ENCODE measurements at regions of chr19 and their contacts with region 1.

Region 1: DNA sequence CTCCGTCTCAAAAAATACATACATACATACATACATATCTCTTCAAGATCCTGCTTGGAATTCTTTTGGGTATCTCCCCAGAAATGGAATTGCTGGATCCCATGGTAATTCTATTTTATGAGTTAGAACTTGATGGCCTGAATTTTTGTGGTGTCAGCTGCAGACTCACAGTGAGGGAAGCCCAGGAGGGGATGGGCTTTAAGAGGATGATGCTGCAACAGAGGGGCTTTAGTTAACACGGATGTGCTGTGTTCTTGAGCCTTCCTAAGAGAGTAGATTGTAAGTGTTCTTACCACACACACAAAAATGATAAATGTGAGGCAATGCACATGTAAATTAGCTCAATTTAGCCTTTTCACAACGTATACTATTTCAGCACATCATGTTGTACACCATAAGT is 31.8 kb downstream of the CACNG6 start:
- DNase-seq: no peak
- H3K4me3 ChIP-seq: no peak overlapping the region
- H3K27ac ChIP-seq: no peak overlapping the region
- H3K4me1 ChIP-seq: no peaks in the 10 kb centered on the region
- H3K27me3 ChIP-seq: no peaks in the 10 kb centered on the region
- CTCF ChIP-seq: no peak
- POLR2A ChIP-seq: no peak

Region 2: DNA sequence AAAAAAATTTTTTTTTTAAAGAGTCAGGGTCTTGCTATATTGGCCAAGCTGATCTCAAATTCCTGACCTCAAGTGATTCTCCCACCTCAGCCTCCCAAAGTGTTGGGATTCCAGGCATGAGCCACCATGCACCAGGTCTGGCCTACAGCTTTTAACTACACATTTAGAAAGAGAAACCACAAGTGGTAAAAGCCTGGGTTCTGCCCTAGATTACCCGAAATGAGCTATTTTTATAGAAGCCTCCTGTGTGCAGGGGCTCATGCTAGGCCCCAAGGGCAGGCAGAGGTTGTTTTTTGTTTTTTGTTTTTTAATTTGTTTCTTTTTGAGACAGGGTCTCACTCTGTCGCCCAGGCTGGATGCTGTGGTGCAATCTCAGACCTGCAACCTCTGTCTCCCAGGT is 169.5 kb before region 1 on chr19:
- intact Hi-C with region 1: loop called (anchors 5 kb)
- DNase-seq: no peak
- H3K4me3 ChIP-seq: no peak overlapping the region
- H3K27ac ChIP-seq: no peak overlapping the region
- H3K4me1 ChIP-seq: no peaks in the 10 kb centered on the region
- H3K27me3 ChIP-seq: no peaks in the 10 kb centered on the region
- CTCF ChIP-seq: no peak
- POLR2A ChIP-seq: no peak

Measured in vagina (tissue), 2 donors.